ENCODE measurements at regions of chr15 and their contacts with region 1.

Region 1: DNA sequence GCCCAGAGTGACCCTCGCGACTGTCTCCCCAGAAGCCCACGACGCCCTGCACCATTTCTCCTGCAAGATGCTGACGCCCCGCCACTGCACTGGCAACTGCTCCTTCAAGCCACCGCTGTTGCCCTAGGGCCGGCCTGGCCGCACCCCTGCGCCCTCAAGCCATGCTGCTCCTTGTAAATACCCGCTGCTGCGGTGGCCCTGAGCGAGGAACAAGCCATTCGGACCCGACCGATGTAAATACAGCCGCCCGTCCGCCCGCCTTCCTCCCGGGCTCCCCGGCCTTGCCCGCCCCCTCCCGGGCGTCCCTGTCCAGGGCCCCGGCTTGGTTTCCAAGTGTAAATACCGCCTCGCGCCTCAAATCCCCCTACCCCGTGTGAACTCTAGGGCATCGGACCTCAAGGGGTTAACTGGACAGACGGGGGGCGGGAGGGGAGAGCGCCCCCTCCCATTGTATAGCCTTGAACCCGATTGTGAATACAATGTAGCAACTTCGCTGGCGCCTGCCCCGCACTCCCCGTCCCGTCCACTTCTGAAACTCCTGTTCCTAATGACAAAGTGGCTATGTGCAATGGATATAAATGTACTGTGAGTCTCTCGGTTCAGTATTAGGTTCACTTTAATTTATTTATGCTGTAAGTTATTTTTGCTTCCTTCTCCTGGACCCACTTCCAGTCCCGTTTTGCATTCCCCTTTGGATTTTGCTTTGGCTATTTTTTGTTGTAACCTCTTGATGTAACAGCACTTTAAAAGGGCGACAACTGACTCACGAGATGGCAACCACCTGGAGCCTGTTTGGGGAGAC is 5.9 kb downstream of the RNU6-1 start:
- DNase-seq: no peak
- H3K4me3 ChIP-seq: peak overlapping the region; percentile 5 to 23 (median 15)
- H3K27ac ChIP-seq: no peak overlapping the region
- H3K4me1 ChIP-seq: peaks cover 31% of the 10 kb centered on the region
- H3K27me3 ChIP-seq: peaks cover 49% of the 10 kb centered on the region
- CTCF ChIP-seq: peak; percentile 6 to 60

Region 2: DNA sequence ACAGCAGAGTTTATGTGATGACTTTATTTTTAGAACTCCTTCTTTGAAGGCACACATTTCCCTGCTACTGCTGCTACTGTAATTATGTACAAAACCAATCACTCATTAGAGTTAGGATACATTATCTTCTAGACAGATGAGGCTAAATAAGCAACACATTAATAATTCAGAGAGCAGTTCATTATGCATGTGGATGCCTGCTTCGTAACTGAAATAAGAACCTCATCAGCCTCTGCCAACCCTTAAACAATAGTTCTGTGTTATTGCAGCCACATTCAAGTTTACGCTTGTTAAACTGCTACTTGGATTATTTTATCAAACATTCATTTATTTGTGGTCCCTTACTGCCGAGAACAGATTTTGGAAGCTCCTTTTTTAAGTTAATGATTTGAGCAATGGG is 365.5 kb before region 1 on chr15:
- CTCF ChIA-PET with region 1: no interaction called
- dilution Hi-C with region 1: no loop called
- in situ Hi-C with region 1: loop called (anchors 5 kb)
- intact Hi-C with region 1: no loop called
- DNase-seq: peak; percentile 33
- H3K4me3 ChIP-seq: no peak overlapping the region
- H3K27ac ChIP-seq: no peak overlapping the region
- H3K4me1 ChIP-seq: peaks cover 35% of the 10 kb centered on the region
- H3K27me3 ChIP-seq: no peaks in the 10 kb centered on the region
- CTCF ChIP-seq: no peak

Region 3: GRCh38 chr15:67501177-67501835 is 332.6 kb before region 1 on chr15:
- CTCF ChIA-PET with region 1: interaction called, 5 read pairs
- dilution Hi-C with region 1: no loop called
- in situ Hi-C with region 1: no loop called
- intact Hi-C with region 1: loop called (anchors 1 kb)
- DNase-seq: peak; percentile 9
- H3K4me3 ChIP-seq: peak overlapping the region in 2 of 3 experiments; percentile 8 to 32
- H3K27ac ChIP-seq: no peak overlapping the region
- H3K4me1 ChIP-seq: peaks cover 10% of the 10 kb centered on the region
- H3K27me3 ChIP-seq: no peaks in the 10 kb centered on the region
- CTCF ChIP-seq: peak; percentile 13 to 54

Region 4: GRCh38 chr15:67812241-67812644 is 21.7 kb before region 1 on chr15:
- CTCF ChIA-PET with region 1: no interaction called
- dilution Hi-C with region 1: no loop called
- in situ Hi-C with region 1: no loop called
- intact Hi-C with region 1: no loop called
- DNase-seq: no peak
- H3K4me3 ChIP-seq: no peak overlapping the region
- H3K27ac ChIP-seq: no peak overlapping the region
- H3K4me1 ChIP-seq: no peaks in the 10 kb centered on the region
- H3K27me3 ChIP-seq: no peaks in the 10 kb centered on the region
- CTCF ChIP-seq: no peak

Region 5: DNA sequence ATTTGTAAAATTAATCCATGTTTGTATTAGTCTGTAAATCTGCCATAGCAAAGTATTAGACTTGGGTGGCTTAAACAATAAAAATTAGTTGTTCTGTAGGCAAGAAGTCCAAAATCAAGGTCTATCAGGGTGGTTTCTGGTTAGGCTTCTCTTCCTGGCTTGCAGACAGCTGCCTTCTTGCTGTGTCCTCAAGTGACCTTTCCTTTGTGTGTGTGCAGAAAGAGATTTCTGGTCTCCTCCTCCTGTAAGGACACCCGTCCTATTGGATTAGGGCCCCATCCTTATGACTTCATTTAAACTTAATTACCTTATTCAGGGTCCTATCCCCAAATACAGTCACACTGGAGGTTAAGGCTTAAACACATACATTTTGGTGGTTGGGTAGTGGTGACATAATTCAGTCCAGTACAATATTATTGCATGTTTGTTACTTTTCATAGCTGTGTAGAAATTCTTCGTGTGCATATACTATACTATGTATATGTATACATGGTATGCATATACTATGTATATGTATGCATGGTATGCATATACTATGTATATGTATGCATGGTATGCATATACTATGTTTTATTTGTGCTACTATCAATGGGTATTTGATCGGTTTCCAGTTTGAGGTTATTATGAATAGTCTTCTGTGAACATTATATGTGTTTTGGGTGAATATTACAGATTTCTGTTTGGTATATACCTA is 63.9 kb after region 1 on chr15:
- CTCF ChIA-PET with region 1: no interaction called
- dilution Hi-C with region 1: no loop called
- in situ Hi-C with region 1: no loop called
- intact Hi-C with region 1: no loop called
- DNase-seq: no peak
- H3K4me3 ChIP-seq: no peak overlapping the region
- H3K27ac ChIP-seq: no peak overlapping the region
- H3K4me1 ChIP-seq: no peaks in the 10 kb centered on the region
- H3K27me3 ChIP-seq: no peaks in the 10 kb centered on the region
- CTCF ChIP-seq: no peak

Region 6: DNA sequence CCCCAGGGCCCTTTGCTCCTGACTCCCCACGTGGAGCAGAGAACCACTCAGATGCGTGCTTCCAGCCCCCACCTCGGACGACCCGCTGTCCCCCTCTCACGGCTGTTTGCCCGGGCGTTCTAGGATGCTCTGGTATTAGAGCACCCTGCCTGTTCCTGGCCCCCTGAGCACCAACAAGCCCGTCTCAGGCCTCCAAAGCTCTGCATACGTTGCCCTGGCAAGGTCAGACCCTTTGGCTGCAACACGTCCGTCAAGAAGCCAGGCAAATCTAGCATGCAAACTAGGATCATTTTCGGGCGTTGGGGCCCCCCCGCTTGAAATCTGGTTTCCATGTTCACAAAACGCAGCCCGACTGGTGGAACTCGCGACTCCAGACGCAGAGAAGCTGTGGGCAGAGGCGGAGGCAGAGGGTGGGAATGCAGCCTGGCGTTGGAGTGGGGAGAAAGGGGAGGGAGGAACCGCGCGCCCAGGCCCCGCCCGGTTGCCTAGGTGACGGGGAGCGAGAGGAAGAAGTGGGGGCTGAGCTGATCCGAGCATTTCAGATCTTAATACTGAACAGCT is 134.0 kb after region 1 on chr15:
- CTCF ChIA-PET with region 1: no interaction called
- dilution Hi-C with region 1: no loop called
- in situ Hi-C with region 1: no loop called
- intact Hi-C with region 1: no loop called
- DNase-seq: peak; percentile 27
- H3K4me3 ChIP-seq: peak overlapping the region; percentile 16 to 21 (median 19)
- H3K27ac ChIP-seq: no peak overlapping the region
- H3K4me1 ChIP-seq: peaks cover 8% of the 10 kb centered on the region
- H3K27me3 ChIP-seq: no peaks in the 10 kb centered on the region
- CTCF ChIP-seq: no peak

Measured in mammary epithelial cell (primary cell).